Activated CD4-positive, alpha-beta T cell treated with anti-CD3 and anti-CD28 coated beads, Interleukin-2, amount 10 ng/mL, durations not matched to agents 24 days and 14 days (primary cell): ENCODE measurements at regions of chr5 and their contacts with region 1.

Region 1: DNA sequence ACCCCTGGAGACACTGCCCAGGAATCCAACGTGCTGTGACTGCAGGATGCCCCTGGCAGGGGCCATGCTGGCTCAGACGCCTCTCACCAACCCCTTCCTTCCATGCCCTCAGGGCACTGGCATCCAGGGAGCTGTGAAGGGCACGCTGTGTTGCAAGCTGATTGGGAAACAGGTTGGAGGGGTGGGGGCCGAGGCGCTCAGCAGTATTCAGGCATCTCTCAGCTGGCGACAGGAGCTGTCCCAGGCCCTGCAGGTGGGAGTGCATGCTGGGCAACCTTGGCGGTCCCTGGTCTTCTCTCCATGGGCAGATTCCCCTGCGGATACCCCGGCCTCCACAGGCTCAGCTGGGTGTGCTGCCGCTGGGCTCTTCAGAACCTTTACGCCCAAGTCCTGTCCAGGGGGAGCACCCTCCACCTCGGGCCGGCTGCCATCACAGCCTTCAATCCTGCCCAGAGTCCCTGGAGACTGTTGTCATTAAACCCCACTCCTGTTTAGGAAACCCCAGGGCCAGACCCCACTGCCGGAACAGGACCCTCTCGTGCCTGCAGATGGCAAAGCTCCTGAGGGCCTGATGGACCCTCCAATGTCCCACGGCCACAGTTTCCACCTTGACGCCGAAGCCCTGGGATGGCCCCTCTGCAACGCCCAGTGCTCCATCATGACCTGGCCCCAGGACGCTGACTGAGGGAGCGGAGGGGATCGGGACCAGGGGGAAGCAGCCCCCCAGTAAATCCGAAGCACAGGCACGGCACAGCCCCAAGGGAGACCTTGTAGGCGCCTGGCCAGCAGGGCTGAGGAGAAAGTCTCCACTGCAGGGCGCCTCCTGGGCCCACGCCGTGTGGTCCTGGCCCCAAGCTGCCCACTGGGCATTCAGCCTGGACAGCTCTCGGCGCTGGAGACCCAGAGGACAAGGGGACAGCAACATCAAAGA is 9.3 kb downstream of the TPPP start:
- DNase-seq: no peak
- H3K4me3 Mint-ChIP-seq: no peak overlapping the region
- H3K27ac Mint-ChIP-seq: no peak overlapping the region
- H3K4me1 Mint-ChIP-seq: no peaks in the 10 kb centered on the region
- H3K27me3 Mint-ChIP-seq: no peaks in the 10 kb centered on the region

Region 2: DNA sequence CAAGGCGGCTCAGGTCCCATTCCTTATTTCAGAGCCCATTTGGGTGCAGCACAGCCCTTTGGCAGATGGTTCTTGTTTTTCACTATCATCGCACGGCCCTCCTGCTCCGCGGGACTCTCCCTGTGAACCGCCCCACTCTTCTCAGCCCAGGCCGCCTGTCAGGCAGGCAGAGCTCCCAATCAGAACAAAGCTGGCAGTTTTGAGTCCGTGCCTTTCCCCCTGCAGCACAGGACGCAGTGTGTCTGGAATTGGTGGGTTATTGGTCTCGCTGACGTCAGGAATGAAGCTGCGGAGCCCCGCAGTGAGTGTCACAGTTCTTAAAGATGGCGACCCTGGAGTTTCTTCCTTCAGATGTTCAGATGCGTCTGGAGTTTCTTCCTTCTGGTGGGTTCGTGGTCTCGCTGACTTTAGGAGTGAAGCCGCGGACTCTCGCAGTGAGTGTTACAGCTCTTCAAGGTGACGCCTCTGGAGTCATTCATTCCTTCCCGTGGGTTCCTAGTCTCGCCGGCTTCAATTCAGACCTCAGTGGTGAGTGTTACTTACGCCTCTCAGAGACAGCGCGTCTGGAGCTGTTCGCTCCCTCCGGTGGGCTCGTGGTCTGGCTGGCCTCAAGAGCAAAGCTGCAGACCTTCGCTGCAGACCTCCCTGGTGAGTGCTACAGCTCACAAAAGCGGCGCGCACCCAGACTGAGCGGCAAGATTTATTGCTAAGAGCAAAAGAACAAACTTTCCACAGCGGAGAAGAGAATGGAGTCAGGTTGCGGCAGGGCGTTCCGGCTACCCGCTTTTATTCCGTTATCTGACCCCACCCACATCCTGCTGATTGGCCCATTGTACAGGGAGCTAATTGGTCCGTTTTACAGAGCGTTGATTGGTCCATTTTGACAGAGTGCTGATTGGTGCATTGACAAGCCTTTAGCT is 93.2 kb after region 1 on chr5:
- intact Hi-C with region 1: loop called (anchors 10 kb)
- DNase-seq: peak; percentile 51
- H3K4me3 Mint-ChIP-seq: no peak overlapping the region
- H3K27ac Mint-ChIP-seq: no peak overlapping the region
- H3K4me1 Mint-ChIP-seq: no peaks in the 10 kb centered on the region
- H3K27me3 Mint-ChIP-seq: no peaks in the 10 kb centered on the region